ENCODE measurements at regions of chr1 and their contacts with region 1.

Region 1: GRCh38 chr1:203625628-203626019 is 1.0 kb upstream of the ATP2B4 start:
- DNase-seq: no peak

Region 2: GRCh38 chr1:202291961-202292712 is 1333.5 kb before region 1 on chr1:
- intact Hi-C with region 1: no loop called
- DNase-seq: no peak

Region 3: DNA sequence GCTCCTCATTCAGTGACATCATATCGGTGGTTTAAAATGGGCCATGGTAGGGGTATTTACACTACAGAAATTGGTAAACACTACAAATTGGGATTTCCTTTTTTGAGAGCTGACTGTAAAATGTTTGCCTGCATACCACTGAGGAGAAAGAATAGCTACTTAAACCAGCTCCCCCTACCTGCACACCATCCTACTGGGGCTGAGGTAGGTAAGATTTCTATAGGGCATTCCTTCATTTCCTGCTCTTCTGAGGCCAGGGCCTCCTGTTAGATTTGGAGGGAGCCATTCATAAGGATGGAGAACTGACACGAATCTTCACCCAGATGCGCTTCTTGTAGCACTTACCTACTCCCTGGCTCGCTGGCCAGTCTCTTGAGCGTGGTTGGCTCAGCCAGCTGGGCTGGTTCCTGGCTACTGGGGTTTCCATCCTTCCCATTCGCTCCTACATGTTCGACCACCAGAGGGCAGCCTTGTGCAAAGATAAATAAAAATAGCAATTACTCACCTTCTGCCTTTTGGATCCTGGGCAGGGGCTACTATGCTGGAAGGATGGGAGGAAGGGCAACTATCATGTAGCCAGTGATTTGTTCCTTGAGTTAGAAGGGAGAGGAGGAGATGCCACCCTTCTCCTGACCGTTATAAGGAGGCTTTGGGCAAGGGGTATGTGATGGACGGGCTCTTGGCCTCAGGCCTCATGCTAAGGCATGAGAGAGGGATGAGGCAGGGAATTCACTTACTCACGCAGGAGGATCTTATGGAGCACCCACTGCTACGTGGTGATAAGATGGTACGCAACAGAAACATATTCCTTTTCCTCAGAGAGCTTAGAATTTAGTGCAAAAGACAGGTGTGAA is 121.0 kb before region 1 on chr1:
- intact Hi-C with region 1: loop called (anchors 5 to 10 kb)
- DNase-seq: peak; percentile 91

Region 4: GRCh38 chr1:203692565-203693470 is 67.2 kb after region 1 on chr1:
- intact Hi-C with region 1: loop called in 1 of 2 experiments (anchors 2 kb)
- DNase-seq: peak; percentile 95

Region 5: GRCh38 chr1:203702130-203702577 is 76.5 kb after region 1 on chr1:
- intact Hi-C with region 1: loop called in 1 of 2 experiments (anchors 5 kb)
- DNase-seq: no peak